ENCODE measurements at regions of chr16 and their contacts with region 1.

Region 1: GRCh38 chr16:4475880-4476788 is at the start of gene HMOX2:
- DNase-seq: peak; percentile 96
- ATAC-seq: peak; percentile 85
- H3K4me3 Mint-ChIP-seq: peak within 1 kb of the TSS; percentile 88
- H3K27ac Mint-ChIP-seq: peak within 1 kb of the TSS; percentile 85
- H3K4me1 Mint-ChIP-seq: peaks cover 43% of the 10 kb centered on the region
- H3K27me3 Mint-ChIP-seq: no peaks in the 10 kb centered on the region
- total RNA-seq, gene HMOX2: 67.7 to 80.2 TPM

Region 2: DNA sequence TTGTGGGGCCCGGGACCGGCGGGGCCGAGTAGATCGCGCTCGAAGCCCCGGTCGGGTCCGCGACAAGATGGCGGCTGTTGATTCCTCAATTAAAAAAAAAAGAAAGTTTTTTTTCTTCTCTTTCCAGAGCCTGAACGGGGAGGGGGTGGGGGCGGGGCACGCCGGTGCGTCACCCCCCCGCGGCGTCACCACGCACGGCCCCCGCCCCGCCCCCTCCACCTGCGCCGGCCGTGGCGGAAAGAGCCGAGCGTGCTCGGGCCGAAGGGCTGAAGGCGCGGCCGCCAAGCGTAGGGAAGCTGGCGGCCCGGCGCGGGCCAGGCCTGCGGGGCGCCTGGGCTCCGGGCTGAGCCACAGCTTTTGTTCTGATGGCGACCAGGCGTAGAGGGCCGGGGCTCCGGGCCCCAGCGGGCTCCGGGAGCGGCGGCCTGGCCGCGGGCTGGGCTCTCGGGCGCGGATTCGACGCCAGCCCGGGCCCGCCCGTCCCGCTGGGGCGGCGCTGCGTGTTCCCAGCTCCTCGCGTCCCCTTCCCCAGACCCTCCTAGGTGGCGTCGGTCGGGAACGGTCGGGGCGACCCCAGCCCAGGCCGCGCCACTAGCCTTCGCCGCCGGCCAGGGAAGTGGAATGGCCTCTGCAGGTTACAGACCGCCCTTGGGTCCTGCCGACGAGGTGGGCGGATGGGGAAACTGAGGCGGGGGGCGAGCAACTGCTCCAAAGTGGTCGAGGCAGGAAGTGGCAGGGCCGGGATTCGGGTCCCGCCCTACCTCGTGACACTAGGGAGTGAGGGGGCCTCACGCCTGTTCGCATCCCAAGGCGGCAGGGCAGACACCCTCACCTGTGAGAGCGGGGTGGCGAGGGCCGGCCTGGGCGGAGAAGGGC is 595.3 kb before region 1 on chr16 and contains the start of gene CREBBP:
- CTCF ChIA-PET with region 1: no interaction called
- POLR2A ChIA-PET with region 1: no interaction called
- intact Hi-C with region 1: loop called in 1 of 2 experiments (anchors 1 kb)
- DNase-seq: peak; percentile 93
- ATAC-seq: peak; percentile 89
- H3K4me3 Mint-ChIP-seq: peak within 1 kb of the TSS; percentile 79
- H3K27ac Mint-ChIP-seq: peak within 1 kb of the TSS; percentile 69
- H3K4me1 Mint-ChIP-seq: peaks cover 36% of the 10 kb centered on the region
- H3K27me3 Mint-ChIP-seq: peaks cover 6% of the 10 kb centered on the region
- total RNA-seq, gene CREBBP: 28.1 to 37.4 TPM

Region 3: GRCh38 chr16:4277987-4278513 is 198.1 kb before region 1 on chr16:
- CTCF ChIA-PET with region 1: no interaction called
- POLR2A ChIA-PET with region 1: no interaction called
- intact Hi-C with region 1: no loop called
- DNase-seq: no peak
- ATAC-seq: no peak
- H3K4me3 Mint-ChIP-seq: no peak overlapping the region
- H3K27ac Mint-ChIP-seq: no peak overlapping the region
- H3K4me1 Mint-ChIP-seq: peaks cover 2% of the 10 kb centered on the region
- H3K27me3 Mint-ChIP-seq: no peaks in the 10 kb centered on the region

Region 4: DNA sequence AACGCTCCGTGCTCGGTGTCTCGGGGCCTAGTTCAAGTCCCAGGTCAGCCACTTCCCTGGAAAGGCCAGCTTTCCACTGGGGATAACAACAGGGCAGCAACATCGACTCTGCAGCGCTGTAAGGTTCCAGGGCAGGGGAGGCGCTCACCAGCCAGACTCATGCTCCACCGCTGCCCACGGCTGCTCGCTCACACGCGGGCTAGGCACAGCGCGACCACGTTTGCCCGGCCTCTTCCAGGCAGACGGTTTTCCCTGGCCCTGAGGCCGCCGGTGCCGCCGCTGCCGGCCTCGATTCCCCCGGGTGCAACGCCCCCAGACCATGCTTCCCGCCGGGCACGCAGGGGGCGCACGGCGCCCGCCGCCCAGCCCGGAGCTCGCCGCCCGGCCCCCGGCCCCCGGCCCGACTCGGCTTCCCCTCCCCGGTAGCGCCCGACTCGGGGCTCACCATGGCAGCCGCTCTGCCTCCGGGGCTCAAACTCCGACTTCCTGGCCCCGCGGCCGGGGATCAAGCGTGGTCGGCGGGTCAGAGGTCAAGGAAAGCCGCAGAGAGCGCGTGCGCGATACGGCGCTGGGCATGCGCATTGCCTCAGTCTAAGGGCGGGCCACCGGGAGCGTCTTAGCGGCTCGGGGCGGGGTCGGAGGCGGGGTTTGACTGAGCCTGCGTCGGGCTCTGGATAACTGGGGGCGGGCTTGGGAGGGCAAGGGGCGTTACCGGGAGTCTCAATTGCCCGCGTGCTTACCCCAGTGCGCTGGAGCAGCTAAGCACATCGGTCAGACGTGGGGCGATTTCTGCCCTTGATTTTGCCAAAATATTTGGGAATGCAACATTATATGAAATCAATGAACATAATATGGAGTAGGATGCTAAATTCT is 125.1 kb before region 1 on chr16 and contains the start of gene PAM16:
- CTCF ChIA-PET with region 1: no interaction called
- POLR2A ChIA-PET with region 1: no interaction called
- intact Hi-C with region 1: loop called in 1 of 2 experiments (anchors 1 kb)
- DNase-seq: peak; percentile 99
- ATAC-seq: peak; percentile 96
- H3K4me3 Mint-ChIP-seq: peak within 1 kb of the TSS; percentile 89
- H3K27ac Mint-ChIP-seq: peak within 1 kb of the TSS; percentile 88
- H3K4me1 Mint-ChIP-seq: peaks cover 20% of the 10 kb centered on the region
- H3K27me3 Mint-ChIP-seq: no peaks in the 10 kb centered on the region
- total RNA-seq, gene PAM16: 62.8 to 67.8 TPM

Region 5: GRCh38 chr16:4487955-4488498 is 11.9 kb after region 1 on chr16:
- CTCF ChIA-PET with region 1: interaction called, 37 read pairs
- POLR2A ChIA-PET with region 1: interaction called, 5 read pairs
- intact Hi-C with region 1: loop called in 1 of 2 experiments (anchors 1 kb)
- DNase-seq: no peak
- ATAC-seq: peak; percentile 59
- H3K4me3 Mint-ChIP-seq: peak overlapping the region; percentile 2
- H3K27ac Mint-ChIP-seq: peak overlapping the region; percentile 92
- H3K4me1 Mint-ChIP-seq: peaks cover 56% of the 10 kb centered on the region
- H3K27me3 Mint-ChIP-seq: no peaks in the 10 kb centered on the region

Region 6: DNA sequence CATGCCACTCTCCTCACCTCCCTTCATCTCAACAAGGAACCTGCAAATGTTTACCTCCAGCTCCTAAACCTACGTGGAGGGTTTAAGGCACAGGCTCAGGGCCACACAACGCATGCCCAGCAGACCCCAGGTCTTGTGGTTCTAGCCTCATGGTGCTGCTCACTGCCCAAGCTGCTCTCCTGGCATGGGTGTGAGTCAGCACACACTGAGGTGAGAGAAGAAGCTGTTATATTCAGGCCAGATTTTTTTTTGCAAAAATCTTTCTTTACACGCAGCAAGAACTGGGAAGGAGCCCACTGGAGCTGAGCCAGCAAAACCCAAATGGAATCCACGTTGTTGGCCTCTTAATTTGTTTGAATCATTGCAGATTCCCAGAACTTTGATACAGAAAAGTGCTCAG is 74.5 kb after region 1 on chr16:
- CTCF ChIA-PET with region 1: interaction called, 4 read pairs
- POLR2A ChIA-PET with region 1: interaction called, 3 read pairs
- intact Hi-C with region 1: loop called in 1 of 2 experiments (anchors 1 kb)
- DNase-seq: no peak
- ATAC-seq: no peak
- H3K4me3 Mint-ChIP-seq: no peak overlapping the region
- H3K27ac Mint-ChIP-seq: no peak overlapping the region
- H3K4me1 Mint-ChIP-seq: peaks cover 7% of the 10 kb centered on the region
- H3K27me3 Mint-ChIP-seq: no peaks in the 10 kb centered on the region

Region 7: GRCh38 chr16:4580245-4580644 is 104.1 kb after region 1 on chr16:
- CTCF ChIA-PET with region 1: no interaction called
- POLR2A ChIA-PET with region 1: no interaction called
- intact Hi-C with region 1: no loop called
- DNase-seq: no peak
- ATAC-seq: no peak
- H3K4me3 Mint-ChIP-seq: no peak overlapping the region
- H3K27ac Mint-ChIP-seq: no peak overlapping the region
- H3K4me1 Mint-ChIP-seq: no peaks in the 10 kb centered on the region
- H3K27me3 Mint-ChIP-seq: no peaks in the 10 kb centered on the region

Region 8: DNA sequence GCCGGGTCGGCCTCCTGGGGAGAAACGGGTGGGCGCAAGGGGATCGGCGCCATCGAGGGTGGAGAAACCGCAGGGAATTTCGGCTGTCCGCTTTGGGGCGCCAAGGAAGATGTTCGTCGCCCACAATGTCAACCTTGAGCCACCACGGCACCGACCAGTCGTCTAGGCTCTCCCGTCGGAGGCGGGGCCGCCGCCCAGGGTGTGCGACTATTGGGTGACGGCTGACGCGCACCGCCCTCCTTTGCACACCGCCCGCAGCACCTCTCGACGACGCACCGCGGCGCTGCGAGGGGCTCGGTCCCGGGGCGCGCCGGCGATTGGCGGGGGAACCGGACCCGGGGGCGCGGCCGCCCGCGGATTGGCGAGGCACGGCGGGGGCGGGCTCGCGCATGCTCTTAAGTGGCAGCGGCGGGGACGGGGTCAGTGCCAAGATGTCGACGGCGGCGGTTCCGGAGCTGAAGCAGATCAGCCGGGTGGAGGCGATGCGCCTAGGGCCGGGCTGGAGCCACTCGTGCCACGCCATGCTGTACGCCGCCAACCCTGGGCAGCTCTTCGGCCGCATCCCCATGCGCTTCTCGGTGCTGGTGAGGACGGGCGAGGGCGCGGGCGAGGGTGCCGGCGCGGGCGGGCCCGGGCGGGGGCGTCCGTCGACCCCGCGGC is 217.3 kb after region 1 on chr16 and contains the start of gene NUDT16L1:
- CTCF ChIA-PET with region 1: interaction called, 3 read pairs
- POLR2A ChIA-PET with region 1: no interaction called
- intact Hi-C with region 1: loop called in 1 of 2 experiments (anchors 1 kb)
- DNase-seq: peak; percentile 98
- ATAC-seq: peak; percentile 95
- H3K4me3 Mint-ChIP-seq: peak within 1 kb of the TSS; percentile 77
- H3K27ac Mint-ChIP-seq: peak within 1 kb of the TSS; percentile 83
- H3K4me1 Mint-ChIP-seq: peaks cover 17% of the 10 kb centered on the region
- H3K27me3 Mint-ChIP-seq: no peaks in the 10 kb centered on the region
- total RNA-seq, gene NUDT16L1: 16.4 to 22.5 TPM

Region 9: GRCh38 chr16:4802659-4803287 is 326.6 kb after region 1 on chr16:
- CTCF ChIA-PET with region 1: no interaction called
- POLR2A ChIA-PET with region 1: no interaction called
- intact Hi-C with region 1: loop called in 1 of 2 experiments (anchors 2 kb)
- DNase-seq: peak; percentile 92
- ATAC-seq: peak; percentile 98
- H3K4me3 Mint-ChIP-seq: peak overlapping the region; percentile 74
- H3K27ac Mint-ChIP-seq: peak overlapping the region; percentile 58
- H3K4me1 Mint-ChIP-seq: peaks cover 14% of the 10 kb centered on the region
- H3K27me3 Mint-ChIP-seq: no peaks in the 10 kb centered on the region

Region 10: GRCh38 chr16:4828567-4829321 is 352.6 kb after region 1 on chr16:
- CTCF ChIA-PET with region 1: no interaction called
- POLR2A ChIA-PET with region 1: no interaction called
- intact Hi-C with region 1: no loop called
- DNase-seq: no peak
- ATAC-seq: no peak
- H3K4me3 Mint-ChIP-seq: no peak overlapping the region
- H3K27ac Mint-ChIP-seq: no peak overlapping the region
- H3K4me1 Mint-ChIP-seq: peaks cover 1% of the 10 kb centered on the region
- H3K27me3 Mint-ChIP-seq: no peaks in the 10 kb centered on the region

Region 11: DNA sequence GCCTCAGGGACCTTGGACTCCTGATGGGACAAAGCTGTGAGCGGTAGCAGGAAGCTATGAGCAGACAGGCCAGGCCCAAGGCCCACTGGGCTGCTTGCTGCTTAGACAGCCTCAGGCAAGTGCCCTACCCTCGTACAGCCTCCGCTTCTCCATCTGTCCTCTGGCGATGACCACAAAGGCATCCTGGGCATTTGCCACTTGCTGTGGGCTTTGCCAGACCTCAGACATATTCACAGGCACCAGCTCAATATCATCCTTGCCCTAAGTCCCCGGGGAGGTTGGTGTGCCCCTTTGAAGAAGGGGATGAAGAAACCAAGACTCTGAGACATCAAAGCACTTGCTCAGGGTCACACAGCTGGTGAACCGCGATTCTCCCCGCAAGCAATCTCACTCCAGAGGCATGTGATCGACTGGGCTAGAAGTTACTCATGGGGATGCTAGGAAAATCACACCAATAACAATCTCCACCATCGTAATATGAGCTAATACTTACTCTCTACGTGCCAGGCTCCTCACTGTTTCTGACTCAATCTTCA is 439.2 kb after region 1 on chr16:
- CTCF ChIA-PET with region 1: no interaction called
- POLR2A ChIA-PET with region 1: no interaction called
- intact Hi-C with region 1: no loop called
- DNase-seq: peak; percentile 18
- ATAC-seq: no peak
- H3K4me3 Mint-ChIP-seq: no peak overlapping the region
- H3K27ac Mint-ChIP-seq: no peak overlapping the region
- H3K4me1 Mint-ChIP-seq: no peaks in the 10 kb centered on the region
- H3K27me3 Mint-ChIP-seq: no peaks in the 10 kb centered on the region